CD8-positive, alpha-beta T cell (primary cell): ENCODE measurements at regions of chr19 and their contacts with region 1.

Region 1: DNA sequence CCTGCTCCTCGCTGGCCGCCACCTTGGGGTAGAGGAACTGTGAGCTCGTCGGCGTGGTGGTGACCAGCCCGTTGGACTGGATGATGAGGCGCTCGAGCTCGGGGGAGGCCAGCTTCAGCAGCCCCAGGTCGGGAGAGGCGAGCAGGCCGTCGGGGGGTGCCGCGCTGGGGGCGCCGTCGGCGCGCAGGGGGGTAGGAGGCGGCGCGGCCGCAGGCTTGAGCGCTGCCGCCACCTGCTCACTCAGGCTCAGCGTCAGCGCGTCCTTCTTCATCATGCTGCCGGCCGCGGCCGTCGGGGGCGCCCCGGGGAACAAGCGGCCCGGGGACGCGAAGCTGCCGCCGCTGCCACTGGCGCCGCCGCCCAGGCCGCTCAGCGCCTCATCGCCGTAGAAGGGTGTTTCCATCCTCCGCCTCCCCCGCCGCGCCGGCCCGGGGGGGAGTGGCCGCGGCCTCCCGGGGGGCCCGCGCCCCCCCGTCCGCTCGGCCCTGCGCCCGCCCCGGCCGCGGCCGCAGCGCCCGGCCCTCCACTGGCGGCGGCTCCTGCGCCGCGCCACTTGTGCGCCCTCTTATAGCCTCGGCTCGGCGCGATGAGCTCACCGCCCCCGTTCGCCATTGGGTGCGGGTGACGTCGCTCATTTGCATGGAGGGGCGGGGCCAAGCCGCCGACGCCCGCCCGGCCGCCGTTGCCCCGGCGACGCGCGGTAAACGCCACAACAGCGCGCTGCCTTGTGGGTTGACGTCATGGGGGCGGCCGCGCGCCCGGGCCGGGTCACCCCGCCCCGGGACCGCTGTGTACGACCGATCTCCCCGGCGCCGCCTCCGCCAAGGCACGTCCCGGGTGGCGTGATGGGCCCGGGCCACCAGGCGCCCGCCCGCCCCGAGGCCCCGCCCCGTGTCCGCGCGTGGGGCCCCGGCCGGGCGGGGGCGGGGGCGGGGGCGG is at the start of gene JUND:
- DNase-seq: peak; percentile 95 to 100 (median 98)
- ATAC-seq: peak; percentile 63
- H3K4me3 ChIP-seq: peak within 1 kb of the TSS; percentile 97 to 98
- H3K4me3 Mint-ChIP-seq: peak within 1 kb of the TSS; percentile 97
- H3K27ac ChIP-seq: peak within 1 kb of the TSS; percentile 99 to 100
- H3K27ac Mint-ChIP-seq: peak within 1 kb of the TSS; percentile 98
- H3K4me1 ChIP-seq: peaks cover 39% of the 10 kb centered on the region
- H3K4me1 Mint-ChIP-seq: peaks cover 47% of the 10 kb centered on the region
- H3K27me3 ChIP-seq: no peaks in the 10 kb centered on the region
- H3K27me3 Mint-ChIP-seq: no peaks in the 10 kb centered on the region
- CTCF ChIP-seq: no peak
- total RNA-seq, gene JUND: 1,995 to 2,125 TPM

Region 2: DNA sequence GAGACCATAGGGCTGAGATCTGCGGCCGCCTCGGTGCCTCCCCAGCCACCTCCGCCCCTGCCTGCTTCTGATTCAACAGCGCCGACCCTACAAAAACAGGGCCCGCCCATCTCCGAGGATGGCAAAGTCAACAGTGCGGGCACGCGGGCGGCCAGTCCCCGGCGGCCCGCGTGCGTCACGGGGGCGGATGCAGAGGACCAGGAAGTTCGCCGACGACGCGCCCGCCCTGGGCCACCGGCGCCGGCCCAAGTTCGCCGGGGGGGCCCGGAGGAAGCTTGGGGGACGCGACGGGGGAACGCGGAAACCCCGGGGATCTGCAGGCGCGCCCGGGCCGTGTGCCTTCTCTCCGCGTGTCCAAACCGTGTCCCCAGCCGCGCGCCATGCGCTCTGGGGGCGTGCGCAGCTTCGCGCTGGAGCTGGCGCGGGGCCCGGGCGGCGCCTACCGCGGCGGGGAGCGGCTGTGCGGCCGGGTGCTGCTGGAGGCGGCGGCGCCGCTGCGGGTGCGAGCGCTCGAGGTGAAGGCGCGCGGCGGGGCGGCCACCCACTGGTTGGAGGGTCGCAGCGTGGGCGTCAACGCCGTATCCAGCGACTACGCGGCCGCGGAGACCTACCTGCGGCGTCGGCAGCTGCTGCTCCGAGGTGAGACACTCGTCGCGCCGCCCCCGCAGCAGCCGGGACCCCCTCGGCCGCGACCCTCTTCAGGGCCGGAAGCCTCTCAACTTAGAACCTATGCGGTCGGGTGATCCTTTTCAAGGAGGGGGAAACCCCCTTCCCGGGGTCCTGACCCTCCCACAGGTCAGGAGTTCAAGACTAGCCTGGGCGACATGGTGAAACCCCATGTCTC is 280.2 kb before region 1 on chr19:
- CTCF ChIA-PET with region 1: no interaction called
- POLR2A ChIA-PET with region 1: interaction called, 11 read pairs
- intact Hi-C with region 1: no loop called
- DNase-seq: peak; percentile 90 to 99 (median 96)
- ATAC-seq: peak; percentile 81
- H3K4me3 ChIP-seq: peak overlapping the region; percentile 65 to 69
- H3K4me3 Mint-ChIP-seq: peak overlapping the region; percentile 92
- H3K27ac ChIP-seq: peak overlapping the region; percentile 94
- H3K27ac Mint-ChIP-seq: peak overlapping the region; percentile 98
- H3K4me1 ChIP-seq: peaks cover 29% of the 10 kb centered on the region
- H3K4me1 Mint-ChIP-seq: peaks cover 32% of the 10 kb centered on the region
- H3K27me3 ChIP-seq: no peaks in the 10 kb centered on the region
- H3K27me3 Mint-ChIP-seq: no peaks in the 10 kb centered on the region
- CTCF ChIP-seq: no peak

Region 3: GRCh38 chr19:18192673-18193387 is 88.5 kb before region 1 on chr19 and contains the start of gene MPV17L2:
- CTCF ChIA-PET with region 1: interaction called, 9 read pairs
- POLR2A ChIA-PET with region 1: interaction called, 35 read pairs
- intact Hi-C with region 1: loop called in 1 of 2 experiments (anchors 1 kb)
- DNase-seq: peak; percentile 95 to 100 (median 97)
- ATAC-seq: peak; percentile 84
- H3K4me3 ChIP-seq: peak within 1 kb of the TSS; percentile 73
- H3K4me3 Mint-ChIP-seq: peak within 1 kb of the TSS; percentile 87
- H3K27ac ChIP-seq: peak within 1 kb of the TSS; percentile 64 to 82
- H3K27ac Mint-ChIP-seq: peak within 1 kb of the TSS; percentile 90
- H3K4me1 ChIP-seq: peaks cover 18% of the 10 kb centered on the region
- H3K4me1 Mint-ChIP-seq: peaks cover 22% of the 10 kb centered on the region
- H3K27me3 ChIP-seq: no peaks in the 10 kb centered on the region
- H3K27me3 Mint-ChIP-seq: no peaks in the 10 kb centered on the region
- CTCF ChIP-seq: no peak
- total RNA-seq, gene MPV17L2: 4.0 to 5.2 TPM

Region 4: GRCh38 chr19:18297308-18297707 is 16.0 kb after region 1 on chr19:
- CTCF ChIA-PET with region 1: interaction called, 91 read pairs
- POLR2A ChIA-PET with region 1: interaction called, 207 read pairs
- intact Hi-C with region 1: loop called in 1 of 2 experiments (anchors 1 kb)
- DNase-seq: no peak
- ATAC-seq: no peak
- H3K4me3 ChIP-seq: no peak overlapping the region
- H3K4me3 Mint-ChIP-seq: no peak overlapping the region
- H3K27ac ChIP-seq: no peak overlapping the region
- H3K27ac Mint-ChIP-seq: no peak overlapping the region
- H3K4me1 ChIP-seq: peaks cover 38% of the 10 kb centered on the region
- H3K4me1 Mint-ChIP-seq: peaks cover 33% of the 10 kb centered on the region
- H3K27me3 ChIP-seq: no peaks in the 10 kb centered on the region
- H3K27me3 Mint-ChIP-seq: no peaks in the 10 kb centered on the region
- CTCF ChIP-seq: no peak

Region 5: GRCh38 chr19:18322759-18323460 is 41.6 kb after region 1 on chr19 and contains the start of gene LSM4:
- CTCF ChIA-PET with region 1: interaction called, 318 read pairs
- POLR2A ChIA-PET with region 1: interaction called, 267 read pairs
- intact Hi-C with region 1: loop called (anchors 1 kb)
- DNase-seq: peak; percentile 99 to 100 (median 99)
- ATAC-seq: peak; percentile 94
- H3K4me3 ChIP-seq: peak within 1 kb of the TSS; percentile 84 to 94
- H3K4me3 Mint-ChIP-seq: peak within 1 kb of the TSS; percentile 84
- H3K27ac ChIP-seq: peak within 1 kb of the TSS; percentile 81 to 85
- H3K27ac Mint-ChIP-seq: peak within 1 kb of the TSS; percentile 92
- H3K4me1 ChIP-seq: peaks cover 58% of the 10 kb centered on the region
- H3K4me1 Mint-ChIP-seq: peaks cover 47% of the 10 kb centered on the region
- H3K27me3 ChIP-seq: no peaks in the 10 kb centered on the region
- H3K27me3 Mint-ChIP-seq: no peaks in the 10 kb centered on the region
- CTCF ChIP-seq: peak; percentile 71
- total RNA-seq, gene LSM4: 41.1 to 43.9 TPM

Region 6: GRCh38 chr19:18340190-18340989 is 59.0 kb after region 1 on chr19 and contains the start of gene PGPEP1:
- CTCF ChIA-PET with region 1: interaction called, 48 read pairs
- POLR2A ChIA-PET with region 1: interaction called, 13 read pairs
- intact Hi-C with region 1: no loop called
- DNase-seq: peak; percentile 13 to 84 (median 67)
- ATAC-seq: peak; percentile 39
- H3K4me3 ChIP-seq: peak within 1 kb of the TSS; percentile 50 to 75
- H3K4me3 Mint-ChIP-seq: peak within 1 kb of the TSS; percentile 88
- H3K27ac ChIP-seq: peak within 1 kb of the TSS; percentile 49 to 51
- H3K27ac Mint-ChIP-seq: peak within 1 kb of the TSS; percentile 85
- H3K4me1 ChIP-seq: peaks cover 15% of the 10 kb centered on the region
- H3K4me1 Mint-ChIP-seq: peaks cover 13% of the 10 kb centered on the region
- H3K27me3 ChIP-seq: no peaks in the 10 kb centered on the region
- H3K27me3 Mint-ChIP-seq: no peaks in the 10 kb centered on the region
- CTCF ChIP-seq: no peak
- total RNA-seq, gene PGPEP1: 20.0 to 25.2 TPM

Region 7: DNA sequence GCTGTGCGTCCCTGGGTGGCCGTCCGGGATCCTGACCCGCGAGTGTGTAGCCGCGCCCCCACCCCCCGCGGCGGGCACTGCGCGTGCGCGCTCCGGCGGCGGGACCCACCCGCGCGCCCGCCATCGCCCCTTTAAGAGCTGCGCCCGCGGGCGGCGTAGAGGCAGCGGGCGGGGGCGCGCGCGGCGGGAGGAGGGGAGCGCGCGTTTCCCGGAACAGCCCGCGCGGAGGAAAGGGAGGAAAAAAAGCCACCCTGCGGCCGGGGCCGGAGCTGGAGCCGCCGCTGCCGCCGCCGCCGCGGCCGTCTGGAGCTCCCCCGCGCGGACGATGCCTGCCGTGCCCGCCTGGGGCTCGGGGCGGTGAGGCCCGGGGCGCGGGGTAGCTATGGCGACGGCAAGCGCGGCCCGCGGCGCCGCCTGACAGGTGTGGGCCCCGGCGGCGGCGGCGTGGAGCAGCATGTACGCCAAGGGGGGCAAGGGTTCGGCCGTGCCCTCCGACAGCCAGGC is 137.9 kb after region 1 on chr19 and contains the start of gene SSBP4:
- CTCF ChIA-PET with region 1: interaction called, 8 read pairs
- POLR2A ChIA-PET with region 1: interaction called, 21 read pairs
- intact Hi-C with region 1: no loop called
- DNase-seq: peak; percentile 43 to 87 (median 61)
- ATAC-seq: peak; percentile 50
- H3K4me3 ChIP-seq: peak within 1 kb of the TSS; percentile 55 to 74
- H3K4me3 Mint-ChIP-seq: peak within 1 kb of the TSS; percentile 84
- H3K27ac ChIP-seq: peak within 1 kb of the TSS in 1 of 2 experiments; percentile 74
- H3K27ac Mint-ChIP-seq: peak within 1 kb of the TSS; percentile 91
- H3K4me1 ChIP-seq: peaks cover 87% of the 10 kb centered on the region
- H3K4me1 Mint-ChIP-seq: peaks cover 77% of the 10 kb centered on the region
- H3K27me3 ChIP-seq: peaks cover 0 to 7% of the 10 kb centered on the region in 2 experiments
- H3K27me3 Mint-ChIP-seq: peaks cover 14% of the 10 kb centered on the region
- CTCF ChIP-seq: no peak
- total RNA-seq, gene SSBP4: 49.9 to 58.2 TPM